ENCODE measurements at regions of chr15 and their contacts with region 1.

Region 1: GRCh38 chr15:45705510-45706473 is 71.0 kb downstream of the SQOR start:
- DNase-seq: peak; percentile 29
- H3K4me3 ChIP-seq: peak overlapping the region; percentile 52
- CTCF ChIP-seq: peak; percentile 87

Region 2: GRCh38 chr15:45634442-45635190 is 71.2 kb before region 1 on chr15 and contains the start of gene SQOR:
- CTCF ChIA-PET with region 1: interaction called, 32 read pairs
- POLR2A ChIA-PET with region 1: no interaction called
- DNase-seq: no peak
- H3K4me3 ChIP-seq: peak within 1 kb of the TSS; percentile 68
- CTCF ChIP-seq: no peak

Region 3: GRCh38 chr15:45670091-45670490 is 35.7 kb before region 1 on chr15:
- CTCF ChIA-PET with region 1: interaction called, 16 read pairs
- POLR2A ChIA-PET with region 1: no interaction called
- DNase-seq: no peak
- H3K4me3 ChIP-seq: no peak overlapping the region
- CTCF ChIP-seq: no peak

Region 4: GRCh38 chr15:45690581-45691260 is 15.1 kb before region 1 on chr15:
- CTCF ChIA-PET with region 1: interaction called, 20 read pairs
- POLR2A ChIA-PET with region 1: no interaction called
- DNase-seq: no peak
- H3K4me3 ChIP-seq: no peak overlapping the region
- CTCF ChIP-seq: no peak

Region 5: GRCh38 chr15:45790325-45790943 is 84.6 kb after region 1 on chr15:
- CTCF ChIA-PET with region 1: interaction called, 21 read pairs
- POLR2A ChIA-PET with region 1: no interaction called
- DNase-seq: no peak
- H3K4me3 ChIP-seq: no peak overlapping the region
- CTCF ChIP-seq: peak; percentile 40

Region 6: GRCh38 chr15:45903283-45903682 is 197.5 kb after region 1 on chr15:
- CTCF ChIA-PET with region 1: no interaction called
- POLR2A ChIA-PET with region 1: no interaction called
- DNase-seq: no peak
- H3K4me3 ChIP-seq: no peak overlapping the region
- CTCF ChIP-seq: no peak

Measured in AG04449 (cell line).